Activated CD8-positive, alpha-beta T cell treated with anti-CD3 and anti-CD28 coated beads, Interleukin-2, amount 10 ng/mL, durations not matched to agents 7 days and 5 days (primary cell): ENCODE measurements at regions of chr20 and their contacts with region 1.

Region 1: DNA sequence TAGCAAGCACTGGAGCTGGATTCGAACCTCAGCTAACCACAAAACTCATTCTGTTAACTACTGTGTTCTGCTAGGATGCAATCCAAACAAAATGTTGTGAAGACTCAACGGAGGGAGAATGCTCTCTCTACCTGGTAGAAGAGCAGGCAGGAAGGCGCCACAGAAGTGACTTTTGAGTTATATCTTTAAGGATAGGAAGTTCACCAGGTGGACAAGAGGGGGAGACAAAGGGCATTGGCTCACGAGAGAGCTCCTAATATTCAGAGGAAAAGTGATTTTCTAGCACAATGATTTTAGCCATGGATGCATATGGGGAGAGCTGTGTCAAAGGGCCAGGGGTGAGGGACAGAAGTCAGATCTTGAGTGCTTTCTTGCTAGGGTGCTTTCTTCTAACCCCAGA is 108.4 kb upstream of the MAFB start:
- DNase-seq: peak; percentile 37
- ATAC-seq: no peak
- H3K4me3 Mint-ChIP-seq: no peak overlapping the region
- H3K27ac Mint-ChIP-seq: no peak overlapping the region
- H3K4me1 Mint-ChIP-seq: no peaks in the 10 kb centered on the region
- H3K27me3 Mint-ChIP-seq: peaks cover 33% of the 10 kb centered on the region

Region 2: DNA sequence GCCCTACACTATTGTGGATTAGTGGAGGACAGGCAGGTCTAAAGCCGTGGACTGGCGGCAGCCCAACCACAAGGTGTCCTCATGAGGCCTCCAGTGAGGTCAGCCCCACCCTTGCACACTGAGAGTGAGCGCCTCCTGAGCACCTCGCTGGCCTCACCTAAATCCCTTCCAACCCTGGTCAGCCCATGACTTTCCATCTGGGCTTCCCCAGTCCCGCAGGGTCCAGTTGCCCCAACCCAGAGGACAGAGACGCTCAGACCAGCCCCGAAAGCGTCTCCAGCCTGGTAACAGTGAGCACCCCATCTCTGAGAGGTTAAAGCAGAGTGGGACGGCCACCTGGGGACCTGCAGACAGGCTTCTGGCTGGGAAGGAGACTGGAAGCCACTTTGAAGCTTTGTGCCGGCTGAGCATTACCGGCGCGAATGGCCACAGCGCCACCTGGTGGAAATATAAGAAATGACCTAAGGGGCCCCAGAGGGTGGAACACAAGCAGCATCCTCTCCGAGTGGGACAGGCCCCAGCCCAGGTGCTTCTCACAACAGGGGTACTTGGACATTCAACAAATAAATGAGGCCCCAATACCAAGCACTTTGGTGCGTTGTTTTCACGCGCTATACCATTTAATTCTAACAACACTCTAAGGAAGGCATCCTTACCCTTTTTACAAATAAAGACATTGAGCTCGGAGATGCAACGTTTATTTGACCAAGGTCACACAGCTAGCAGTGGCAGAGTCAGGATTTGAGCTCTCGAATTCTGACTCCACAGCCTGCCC is 165.5 kb after region 1 on chr20:
- CTCF ChIA-PET with region 1: interaction called, 49 read pairs
- POLR2A ChIA-PET with region 1: no interaction called
- DNase-seq: peak; percentile 86
- ATAC-seq: peak; percentile 91
- H3K4me3 Mint-ChIP-seq: no peak overlapping the region
- H3K27ac Mint-ChIP-seq: no peak overlapping the region
- H3K4me1 Mint-ChIP-seq: peaks cover 21% of the 10 kb centered on the region
- H3K27me3 Mint-ChIP-seq: peaks cover 9% of the 10 kb centered on the region